Uterus (tissue), 4 donors: ENCODE measurements at regions of chr19 and their contacts with region 1.

Region 1: DNA sequence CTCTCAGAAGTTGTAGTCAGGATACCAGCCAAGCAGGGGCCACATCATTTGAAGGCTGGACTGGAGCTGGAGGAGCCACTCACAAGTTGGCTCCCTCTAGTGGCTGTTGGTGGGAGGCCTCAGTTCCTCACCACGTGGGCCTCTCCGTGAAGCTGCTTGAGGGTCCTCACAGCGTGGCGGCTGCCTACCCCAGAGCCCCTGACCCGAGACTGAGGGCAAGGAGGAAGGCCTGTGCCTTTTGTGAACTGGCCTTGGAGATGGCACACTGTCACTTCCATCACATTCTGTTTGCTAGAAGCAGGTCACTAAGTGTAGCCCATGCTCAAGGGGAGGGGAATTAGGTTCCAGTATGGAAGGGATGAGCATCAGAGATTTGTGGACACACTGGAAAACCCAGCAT is 14.6 kb downstream of the GNA11 start:
- DNase-seq: peak; percentile 52 to 57
- H3K4me3 ChIP-seq: no peak overlapping the region
- H3K27ac ChIP-seq: no peak overlapping the region
- H3K4me1 ChIP-seq: peaks cover 0 to 8% of the 10 kb centered on the region in 2 donors
- H3K27me3 ChIP-seq: no peaks in the 10 kb centered on the region
- CTCF ChIP-seq: peak; percentile 37 to 63 (median 61)
- POLR2A ChIP-seq: no peak

Region 2: DNA sequence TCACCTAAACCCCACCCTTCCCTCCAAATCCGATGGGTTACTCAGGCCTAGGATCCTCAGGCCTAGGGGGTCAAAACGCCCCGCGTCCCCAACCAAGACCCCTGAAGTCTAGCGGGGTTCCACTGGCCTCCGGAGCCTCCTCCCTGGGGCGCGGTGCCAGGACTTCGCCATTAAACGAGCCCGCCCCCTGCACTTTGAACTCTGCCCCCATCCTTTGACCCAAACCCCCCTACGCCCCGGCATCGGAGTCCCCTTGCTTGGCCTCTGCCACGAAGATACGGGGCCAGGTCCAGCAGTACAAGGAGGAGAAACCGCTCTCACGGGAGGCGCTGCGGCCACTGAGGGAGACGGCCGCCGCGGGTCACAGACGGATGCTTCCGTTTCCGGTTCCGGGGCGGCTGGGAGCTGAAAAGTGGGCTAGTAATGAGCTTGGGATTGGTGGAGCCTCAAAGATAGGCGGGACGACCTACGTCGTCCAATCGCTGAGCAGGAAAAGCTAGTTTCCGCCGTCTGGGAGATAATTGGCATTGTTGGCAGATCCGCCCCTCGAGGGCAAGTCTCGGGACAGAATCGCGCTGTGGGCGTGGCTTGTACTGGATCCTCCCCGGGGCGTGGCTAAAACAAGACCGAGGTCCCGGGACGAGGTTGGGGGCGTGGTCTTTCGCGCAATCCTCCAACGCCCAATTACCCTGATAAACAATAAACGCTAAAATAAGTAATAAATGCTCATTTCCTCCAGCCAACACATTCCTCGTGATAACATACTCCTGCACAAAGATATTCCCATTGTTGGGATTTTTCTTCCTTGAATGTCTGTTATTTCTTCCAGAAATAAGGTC is 158.3 kb before region 1 on chr19:
- intact Hi-C with region 1: loop called (anchors 10 kb)
- DNase-seq: peak; percentile 100
- H3K4me3 ChIP-seq: peak overlapping the region; percentile 74 to 75
- H3K27ac ChIP-seq: peak overlapping the region; percentile 96 to 97
- H3K4me1 ChIP-seq: peaks cover 0 to 5% of the 10 kb centered on the region in 2 donors
- H3K27me3 ChIP-seq: no peaks in the 10 kb centered on the region
- CTCF ChIP-seq: peak in 1 of 4 experiments; percentile 6
- POLR2A ChIP-seq: peak; percentile 67 to 90